ENCODE measurements at regions of chr11 and their contacts with region 1.

Region 1: GRCh38 chr11:62591448-62592145 is at the start of gene TUT1:
- H3K4me3 ChIP-seq: peak within 1 kb of the TSS; percentile 50
- H3K27ac ChIP-seq: peak within 1 kb of the TSS; percentile 73
- H3K4me1 ChIP-seq: no peaks in the 10 kb centered on the region
- CTCF ChIP-seq: no peak

Region 2: DNA sequence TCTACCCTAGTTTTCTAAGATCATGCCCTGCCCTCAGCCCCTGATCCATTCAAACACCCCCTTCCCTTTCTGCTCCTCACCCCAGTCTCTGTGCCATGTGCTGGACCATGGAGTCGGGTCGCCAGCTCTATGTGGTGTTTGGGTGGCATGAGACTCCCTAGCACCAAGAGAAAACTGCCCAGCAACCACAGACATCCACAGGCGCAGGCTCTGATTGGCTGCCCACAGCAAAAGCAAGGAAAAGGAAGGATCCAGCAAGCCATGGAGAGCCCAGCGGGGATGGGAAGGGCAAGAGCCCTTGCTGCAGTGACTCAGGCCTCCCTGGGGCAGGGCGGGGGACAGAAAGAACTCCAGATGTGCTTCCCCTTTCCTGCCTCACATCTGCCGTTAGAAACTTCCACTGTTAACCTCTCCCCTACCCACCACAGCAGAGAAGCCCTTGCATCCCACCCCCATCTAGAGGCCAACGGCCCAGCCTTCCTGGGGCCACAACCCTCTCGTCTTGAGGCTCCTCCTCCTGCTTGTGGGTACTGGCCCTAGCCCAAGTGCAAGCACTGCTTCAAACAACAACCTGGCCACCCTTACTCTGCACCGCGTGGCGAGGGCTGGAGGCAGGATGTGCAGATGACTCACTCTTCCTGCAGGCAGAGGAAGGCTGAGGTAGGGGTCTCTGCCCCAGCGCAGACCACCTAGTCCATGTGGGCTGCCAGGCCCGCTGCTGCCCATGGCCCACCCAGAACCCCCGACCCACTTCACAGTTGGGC is 35.3 kb before region 1 on chr11:
- CTCF ChIA-PET with region 1: interaction called, 5 read pairs
- POLR2A ChIA-PET with region 1: interaction called, 13 read pairs
- H3K4me3 ChIP-seq: no peak overlapping the region
- H3K27ac ChIP-seq: peak overlapping the region; percentile 53; the same call in 1 of the 2 replicates
- H3K4me1 ChIP-seq: peaks cover 6% of the 10 kb centered on the region; the same call in 1 of the 2 replicates
- CTCF ChIP-seq: no peak

Region 3: DNA sequence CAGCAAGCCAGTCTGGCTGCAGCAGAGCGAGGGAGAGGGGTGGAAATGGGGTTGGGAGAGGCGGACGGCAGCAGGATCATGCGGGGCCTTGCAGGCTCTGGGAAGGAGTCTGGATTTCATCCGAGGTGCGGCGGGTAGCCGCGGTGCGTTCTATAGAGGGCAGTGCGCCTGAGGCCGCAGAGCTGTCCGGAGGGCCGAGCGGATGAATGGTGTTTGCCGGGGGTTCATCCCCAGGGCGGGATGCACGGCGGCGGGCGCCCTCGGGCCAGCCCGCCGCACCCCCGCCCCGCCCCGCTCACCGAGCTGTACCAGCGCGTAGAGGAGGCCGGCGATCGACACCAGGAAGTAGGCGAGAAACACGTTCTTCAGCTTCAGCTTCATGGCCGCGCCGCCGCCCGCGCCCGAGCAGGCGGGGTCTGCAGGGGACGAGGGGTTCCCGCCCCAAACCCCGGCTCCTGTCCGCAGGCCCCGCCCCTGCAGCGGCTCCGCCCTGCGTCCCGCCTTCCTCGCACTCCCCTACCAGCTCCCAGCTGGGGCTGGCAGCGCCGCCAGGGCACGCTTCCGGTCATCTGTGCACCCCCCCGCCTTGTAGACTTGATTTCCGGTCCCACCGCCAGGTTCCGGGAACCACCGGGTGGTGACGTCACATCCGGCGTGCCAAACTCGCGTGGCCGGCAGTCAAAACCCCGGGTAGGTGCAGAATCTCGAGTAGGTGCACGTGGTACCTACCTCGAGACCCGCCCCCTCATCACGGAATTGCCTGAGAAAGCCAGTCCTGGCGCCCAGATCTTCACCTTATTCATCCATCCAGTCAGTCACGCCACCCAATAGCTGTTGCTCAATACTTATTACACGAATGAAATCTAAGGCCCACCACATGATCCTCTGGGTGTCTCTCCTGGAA is 30.2 kb after region 1 on chr11 and contains the start of gene B3GAT3:
- CTCF ChIA-PET with region 1: interaction called, 6 read pairs
- POLR2A ChIA-PET with region 1: interaction called, 109 read pairs
- H3K4me3 ChIP-seq: peak within 1 kb of the TSS; percentile 71
- H3K27ac ChIP-seq: peak within 1 kb of the TSS; percentile 80
- H3K4me1 ChIP-seq: no peaks in the 10 kb centered on the region
- CTCF ChIP-seq: peak; percentile 5; the same call in 1 of the 2 replicates

Region 4: DNA sequence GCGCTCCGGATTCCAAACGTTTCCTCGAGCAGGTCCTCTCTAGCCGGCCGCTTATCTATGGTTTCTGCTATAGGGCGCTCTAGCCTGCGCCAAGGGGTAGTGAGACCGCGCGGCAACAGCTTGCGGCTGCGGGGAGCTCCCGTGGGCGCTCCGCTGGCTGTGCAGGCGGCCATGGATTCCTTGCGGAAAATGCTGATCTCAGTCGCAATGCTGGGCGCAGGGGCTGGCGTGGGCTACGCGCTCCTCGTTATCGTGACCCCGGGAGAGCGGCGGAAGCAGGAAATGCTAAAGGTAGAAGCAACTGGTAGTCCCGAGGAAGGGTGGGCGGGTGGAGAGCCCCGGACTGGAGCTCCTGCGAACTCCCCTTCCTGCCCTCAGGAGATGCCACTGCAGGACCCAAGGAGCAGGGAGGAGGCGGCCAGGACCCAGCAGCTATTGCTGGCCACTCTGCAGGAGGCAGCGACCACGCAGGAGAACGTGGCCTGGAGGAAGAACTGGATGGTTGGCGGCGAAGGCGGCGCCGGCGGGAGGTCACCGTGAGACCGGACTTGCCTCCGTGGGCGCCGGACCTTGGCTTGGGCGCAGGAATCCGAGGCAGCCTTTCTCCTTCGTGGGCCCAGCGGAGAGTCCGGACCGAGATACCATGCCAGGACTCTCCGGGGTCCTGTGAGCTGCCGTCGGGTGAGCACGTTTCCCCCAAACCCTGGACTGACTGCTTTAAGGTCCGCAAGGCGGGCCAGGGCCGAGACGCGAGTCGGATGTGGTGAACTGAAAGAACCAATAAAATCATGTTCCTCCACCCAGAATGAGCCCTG is 80.2 kb after region 1 on chr11 and contains the starts of genes LBHD1 and UQCC3:
- CTCF ChIA-PET with region 1: no interaction called
- POLR2A ChIA-PET with region 1: interaction called, 33 read pairs
- H3K4me3 ChIP-seq: peak within 1 kb of the TSS; percentile 84
- H3K27ac ChIP-seq: peak within 1 kb of the TSS; percentile 65
- H3K4me1 ChIP-seq: no peaks in the 10 kb centered on the region
- CTCF ChIP-seq: no peak

Region 5: DNA sequence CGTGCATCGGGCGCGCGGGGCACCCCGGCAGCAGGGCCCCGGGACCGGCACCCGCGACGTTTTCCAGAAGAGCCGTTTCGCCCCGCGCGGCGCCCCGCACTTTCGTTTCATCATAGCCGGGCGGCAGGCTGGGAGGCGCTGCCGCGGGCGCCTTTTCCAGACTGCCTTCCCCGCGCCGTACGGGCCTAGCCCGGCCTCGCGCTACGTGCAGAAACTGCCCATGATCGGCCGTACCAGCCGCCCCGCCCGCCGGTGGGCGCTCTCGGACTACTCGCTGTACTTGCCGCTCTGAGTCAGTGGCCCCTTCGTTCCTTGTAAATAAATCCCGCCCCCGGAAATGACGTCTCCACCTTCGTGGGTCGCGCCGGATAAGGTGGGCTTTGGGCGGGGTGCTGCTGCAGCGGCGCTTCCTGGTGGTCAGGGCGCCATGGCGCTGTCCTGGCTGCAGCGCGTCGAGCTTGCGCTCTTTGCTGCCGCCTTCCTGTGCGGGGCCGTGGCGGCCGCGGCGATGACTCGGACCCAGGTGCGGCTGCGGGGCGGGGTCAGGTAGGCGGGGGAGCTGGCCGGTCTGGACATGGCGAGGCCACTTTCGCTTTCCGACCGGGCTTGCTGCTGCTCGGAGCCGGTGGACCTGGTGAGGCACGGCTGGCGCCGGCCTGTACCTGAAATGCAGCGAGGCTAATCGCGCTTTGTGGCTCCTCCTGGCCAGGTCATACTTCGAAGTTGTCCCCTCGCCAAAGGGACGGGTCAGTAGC is 195.6 kb after region 1 on chr11 and contains the start of gene TMEM179B:
- CTCF ChIA-PET with region 1: no interaction called
- POLR2A ChIA-PET with region 1: interaction called, 14 read pairs
- H3K4me3 ChIP-seq: peak within 1 kb of the TSS; percentile 87
- H3K27ac ChIP-seq: peak within 1 kb of the TSS; percentile 76
- H3K4me1 ChIP-seq: no peaks in the 10 kb centered on the region
- CTCF ChIP-seq: peak; percentile 97

Region 6: DNA sequence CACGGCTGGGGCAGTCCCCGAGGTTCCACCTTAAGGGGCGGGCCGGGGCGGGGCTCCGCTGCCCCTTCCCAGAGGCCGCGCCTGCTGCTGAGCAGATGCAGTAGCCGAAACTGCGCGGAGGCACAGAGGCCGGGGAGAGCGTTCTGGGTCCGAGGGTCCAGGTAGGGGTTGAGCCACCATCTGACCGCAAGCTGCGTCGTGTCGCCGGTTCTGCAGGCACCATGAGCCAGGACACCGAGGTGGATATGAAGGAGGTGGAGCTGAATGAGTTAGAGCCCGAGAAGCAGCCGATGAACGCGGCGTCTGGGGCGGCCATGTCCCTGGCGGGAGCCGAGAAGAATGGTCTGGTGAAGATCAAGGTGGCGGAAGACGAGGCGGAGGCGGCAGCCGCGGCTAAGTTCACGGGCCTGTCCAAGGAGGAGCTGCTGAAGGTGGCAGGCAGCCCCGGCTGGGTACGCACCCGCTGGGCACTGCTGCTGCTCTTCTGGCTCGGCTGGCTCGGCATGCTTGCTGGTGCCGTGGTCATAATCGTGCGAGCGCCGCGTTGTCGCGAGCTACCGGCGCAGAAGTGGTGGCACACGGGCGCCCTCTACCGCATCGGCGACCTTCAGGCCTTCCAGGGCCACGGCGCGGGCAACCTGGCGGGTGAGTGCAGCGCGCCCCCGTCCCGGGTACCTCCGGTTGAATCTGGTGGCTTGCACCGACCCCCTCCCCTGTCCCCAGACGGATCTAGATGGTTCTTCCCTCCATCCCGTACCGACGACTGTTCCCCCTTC is 289.4 kb after region 1 on chr11 and contains the start of gene SLC3A2:
- CTCF ChIA-PET with region 1: no interaction called
- POLR2A ChIA-PET with region 1: interaction called, 12 read pairs
- H3K4me3 ChIP-seq: peak within 1 kb of the TSS; percentile 93
- H3K27ac ChIP-seq: peak within 1 kb of the TSS; percentile 98
- H3K4me1 ChIP-seq: no peaks in the 10 kb centered on the region
- CTCF ChIP-seq: peak; percentile 97

Measured in HEK293 (cell line).